ENCODE measurements at regions of chr9 and their contacts with region 1.

Region 1: GRCh38 chr9:114348906-114349482 is 19.3 kb downstream of the ORM2 start:
- DNase-seq: peak; percentile 75
- H3K4me3 Mint-ChIP-seq: no peak overlapping the region
- H3K27ac Mint-ChIP-seq: peak overlapping the region; percentile 91
- H3K4me1 Mint-ChIP-seq: peaks cover 52% of the 10 kb centered on the region
- H3K27me3 Mint-ChIP-seq: no peaks in the 10 kb centered on the region

Region 2: DNA sequence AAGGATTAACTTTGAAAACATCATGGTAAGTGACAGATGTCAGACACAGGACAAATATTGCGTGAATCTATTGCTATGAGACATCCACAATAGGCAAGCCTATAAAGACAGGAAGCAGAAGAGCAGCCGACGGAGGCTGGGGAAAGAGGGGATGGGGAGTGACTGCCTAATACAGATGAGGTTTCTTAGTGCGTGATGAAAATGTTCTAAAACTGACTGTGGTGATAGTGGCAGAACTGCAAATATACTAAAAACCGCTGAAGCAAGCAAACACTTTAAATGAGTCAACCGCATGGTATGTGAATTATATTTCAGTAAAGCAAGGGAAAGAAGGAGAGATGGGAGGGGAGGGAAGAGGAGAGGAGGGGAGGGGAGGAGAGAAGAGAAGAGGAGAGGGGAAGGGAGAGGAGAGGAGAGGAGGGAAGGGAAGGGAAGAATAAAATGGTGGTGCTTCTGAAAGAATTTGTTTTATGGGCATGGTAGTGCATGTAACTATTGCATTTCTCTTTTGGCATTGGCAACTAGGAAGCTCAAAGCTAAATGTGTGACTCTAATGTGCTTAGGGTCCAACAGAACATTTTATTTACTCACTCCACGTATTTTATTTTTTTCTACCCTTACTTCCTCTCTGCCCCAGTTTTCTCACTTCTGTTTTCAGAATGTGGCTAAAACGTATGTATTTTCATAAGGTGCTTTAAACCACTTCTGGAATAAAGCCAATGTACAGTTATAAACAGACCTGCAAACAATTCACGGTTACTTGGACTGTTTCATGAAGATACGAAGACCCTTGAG is 17.5 kb after region 1 on chr9:
- CTCF ChIA-PET with region 1: interaction called, 9 read pairs
- POLR2A ChIA-PET with region 1: interaction called, 20 read pairs
- DNase-seq: peak; percentile 63
- H3K4me3 Mint-ChIP-seq: peak overlapping the region; percentile 49
- H3K27ac Mint-ChIP-seq: peak overlapping the region; percentile 96
- H3K4me1 Mint-ChIP-seq: peaks cover 89% of the 10 kb centered on the region
- H3K27me3 Mint-ChIP-seq: no peaks in the 10 kb centered on the region